ENCODE measurements at regions of chr12 and their contacts with region 1.

Region 1: DNA sequence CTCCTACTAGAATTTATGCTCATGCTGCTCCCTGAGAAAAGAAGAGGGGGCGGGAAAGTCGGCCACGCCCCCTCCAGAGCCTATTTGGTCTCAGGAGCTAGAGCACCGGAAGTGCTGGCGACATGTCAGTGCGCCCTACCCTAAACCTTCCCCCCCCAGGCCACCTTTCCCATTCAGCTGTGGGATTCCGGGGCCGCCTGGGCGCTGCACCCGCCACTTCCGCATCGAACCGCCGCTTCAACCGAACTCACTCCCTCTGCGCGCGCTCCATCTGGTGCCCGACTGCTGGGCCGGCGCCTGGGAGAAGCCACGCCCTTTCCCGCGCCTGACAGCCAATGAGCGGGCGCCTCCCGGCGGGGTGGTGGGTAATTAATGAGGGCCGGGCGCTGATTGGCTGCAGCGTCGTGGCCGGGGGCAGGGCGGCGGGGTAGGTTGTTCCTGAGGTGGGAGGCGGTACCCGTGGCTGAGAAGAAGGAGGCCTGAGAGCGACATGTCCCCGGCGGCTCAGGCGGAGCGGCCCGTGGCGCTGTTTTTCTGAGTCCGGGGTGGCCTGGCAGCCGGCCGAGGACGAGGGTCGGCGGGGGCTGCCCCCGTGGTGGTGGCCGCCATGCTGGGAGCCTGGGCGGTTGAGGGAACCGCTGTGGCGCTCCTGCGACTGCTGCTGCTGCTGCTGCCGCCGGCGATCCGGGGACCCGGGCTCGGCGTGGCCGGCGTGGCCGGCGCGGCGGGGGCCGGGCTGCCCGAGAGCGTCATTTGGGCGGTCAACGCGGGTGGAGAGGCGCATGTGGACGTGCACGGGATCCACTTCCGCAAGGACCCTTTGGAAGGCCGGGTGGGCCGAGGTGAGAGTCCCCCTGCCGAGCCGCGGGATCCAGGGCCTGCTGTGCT is at the start of gene MLEC:
- DNase-seq: peak; percentile 100
- H3K4me3 Mint-ChIP-seq: peak within 1 kb of the TSS; percentile 89
- H3K27ac Mint-ChIP-seq: peak within 1 kb of the TSS; percentile 90
- H3K4me1 Mint-ChIP-seq: peaks cover 48% of the 10 kb centered on the region
- H3K27me3 Mint-ChIP-seq: no peaks in the 10 kb centered on the region
- total RNA-seq, gene MLEC: 136 and 142 TPM in 2 replicates

Region 2: DNA sequence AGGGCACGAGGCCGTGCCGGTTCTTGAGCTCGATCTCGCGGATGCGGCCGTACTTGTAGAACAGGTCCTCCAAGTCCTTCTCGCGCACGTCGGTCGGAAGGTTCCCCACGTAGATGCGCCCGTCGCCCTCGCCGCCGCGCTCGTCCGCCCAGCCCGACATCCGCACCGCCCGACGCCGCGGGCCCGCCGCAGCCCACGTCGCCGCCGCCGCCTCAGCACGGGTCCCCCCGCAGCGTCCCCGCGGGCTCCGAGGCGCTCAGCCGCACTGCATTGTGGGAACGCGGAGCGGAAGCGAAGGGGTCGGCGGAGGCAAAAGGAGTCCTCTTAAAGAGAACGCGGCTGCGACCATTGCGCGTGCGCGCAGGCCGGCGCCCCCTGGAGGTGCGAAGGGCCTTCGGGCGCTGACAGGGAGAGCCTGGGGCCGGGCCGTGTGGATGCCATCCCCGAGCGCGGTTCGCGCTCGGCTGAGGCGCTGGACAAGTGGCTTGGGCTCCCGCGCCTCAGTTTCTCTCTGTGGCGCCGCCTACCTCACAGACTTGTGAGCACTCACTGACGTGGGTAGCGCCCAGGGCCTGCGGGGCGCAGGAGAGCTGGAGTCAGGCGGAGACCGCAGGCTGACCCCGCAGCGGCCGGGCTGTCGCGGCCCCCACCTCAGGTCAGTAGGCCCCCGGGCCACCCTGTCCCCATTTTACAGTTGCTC is 217.3 kb before region 1 on chr12 and contains the start of gene SRSF9:
- intact Hi-C with region 1: loop called (anchors 2 kb)
- DNase-seq: peak; percentile 96
- H3K4me3 Mint-ChIP-seq: peak within 1 kb of the TSS; percentile 95
- H3K27ac Mint-ChIP-seq: peak within 1 kb of the TSS; percentile 81
- H3K4me1 Mint-ChIP-seq: peaks cover 40% of the 10 kb centered on the region
- H3K27me3 Mint-ChIP-seq: peaks cover 2% of the 10 kb centered on the region
- total RNA-seq, gene SRSF9: 248 and 251 TPM in 2 replicates

Region 3: GRCh38 chr12:120588948-120589930 is 97.7 kb before region 1 on chr12:
- intact Hi-C with region 1: no loop called
- DNase-seq: no peak
- H3K4me3 Mint-ChIP-seq: no peak overlapping the region
- H3K27ac Mint-ChIP-seq: no peak overlapping the region
- H3K4me1 Mint-ChIP-seq: no peaks in the 10 kb centered on the region
- H3K27me3 Mint-ChIP-seq: peaks cover 10% of the 10 kb centered on the region

Region 4: GRCh38 chr12:120649442-120650232 is 37.3 kb before region 1 on chr12:
- intact Hi-C with region 1: loop called (anchors 1 kb)
- DNase-seq: no peak
- H3K4me3 Mint-ChIP-seq: peak overlapping the region; percentile 27
- H3K27ac Mint-ChIP-seq: no peak overlapping the region
- H3K4me1 Mint-ChIP-seq: peaks cover 13% of the 10 kb centered on the region
- H3K27me3 Mint-ChIP-seq: peaks cover 53% of the 10 kb centered on the region

Region 5: DNA sequence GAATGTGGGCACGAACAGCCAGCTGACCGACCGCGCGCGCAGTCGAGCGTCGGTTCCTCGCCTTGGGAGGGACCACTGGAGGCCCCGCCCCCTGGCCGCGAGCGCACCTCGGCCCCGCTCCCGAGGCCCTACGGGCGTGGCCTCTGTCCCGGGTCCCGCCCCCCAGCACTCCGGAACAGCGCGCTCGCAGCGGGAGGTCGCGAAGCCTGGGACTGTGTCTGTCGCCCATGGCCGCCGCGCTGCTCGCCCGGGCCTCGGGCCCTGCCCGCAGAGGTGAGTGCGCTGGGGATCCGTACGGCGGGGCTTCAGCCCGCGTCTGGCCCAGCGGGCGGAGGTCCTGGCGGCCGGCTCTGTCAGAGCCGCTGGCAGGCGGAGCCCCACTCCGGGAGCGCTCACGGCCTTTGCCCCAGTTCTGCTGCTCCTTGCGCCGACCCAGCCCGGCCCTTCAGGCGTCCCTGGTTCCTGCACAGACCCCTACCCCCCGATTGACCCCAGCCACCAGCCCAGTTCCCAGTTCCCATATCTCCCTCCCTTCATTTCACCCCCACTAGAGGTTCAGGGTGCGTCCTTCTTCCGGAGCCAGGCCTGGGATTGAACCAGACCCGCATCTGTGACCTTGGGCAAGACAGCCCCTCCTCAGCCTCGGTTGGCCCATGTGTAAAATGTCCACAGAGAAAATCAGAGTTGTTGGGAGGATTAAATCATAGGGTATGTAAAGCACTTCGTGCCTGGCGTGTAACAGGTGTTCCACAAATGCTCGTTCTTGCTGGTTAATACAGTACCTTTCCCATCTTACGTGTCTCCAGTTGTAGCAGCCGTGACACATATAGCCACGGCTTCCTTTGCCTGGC is 39.0 kb after region 1 on chr12 and contains the start of gene ACADS:
- intact Hi-C with region 1: loop called (anchors 5 kb)
- DNase-seq: peak; percentile 87
- H3K4me3 Mint-ChIP-seq: peak within 1 kb of the TSS; percentile 96
- H3K27ac Mint-ChIP-seq: peak within 1 kb of the TSS; percentile 79
- H3K4me1 Mint-ChIP-seq: peaks cover 20% of the 10 kb centered on the region
- H3K27me3 Mint-ChIP-seq: no peaks in the 10 kb centered on the region
- total RNA-seq, gene ACADS: 16.4 and 16.6 TPM in 2 replicates

Region 6: GRCh38 chr12:120800665-120801064 is 113.7 kb after region 1 on chr12:
- intact Hi-C with region 1: no loop called
- DNase-seq: no peak
- H3K4me3 Mint-ChIP-seq: no peak overlapping the region
- H3K27ac Mint-ChIP-seq: peak overlapping the region; percentile 42
- H3K4me1 Mint-ChIP-seq: peaks cover 61% of the 10 kb centered on the region
- H3K27me3 Mint-ChIP-seq: no peaks in the 10 kb centered on the region